ENCODE measurements at regions of chr5 and their contacts with region 1.

Region 1: GRCh38 chr5:127290019-127290945 is at the start of gene MEGF10:
- DNase-seq: peak; percentile 15 to 54 (median 36)
- ATAC-seq: peak; percentile 58
- H3K4me3 ChIP-seq: peak within 1 kb of the TSS in 1 of 2 donors; percentile 2
- H3K27ac ChIP-seq: no peak within 1 kb of the TSS
- H3K4me1 ChIP-seq: peaks cover 9% of the 10 kb centered on the region
- H3K27me3 ChIP-seq: no peaks in the 10 kb centered on the region
- CTCF ChIP-seq: peak; percentile 37 to 67 (median 64)
- POLR2A ChIP-seq: no peak
- total RNA-seq, gene MEGF10: under 0.01 TPM in 1 of 2 donors, not detected in the other

Region 2: GRCh38 chr5:127492854-127493738 is 202.8 kb after region 1 on chr5:
- intact Hi-C with region 1: loop called (anchors 10 kb)
- DNase-seq: no peak
- ATAC-seq: peak; percentile 64
- H3K4me3 ChIP-seq: no peak overlapping the region
- H3K27ac ChIP-seq: no peak overlapping the region
- H3K4me1 ChIP-seq: no peaks in the 10 kb centered on the region
- H3K27me3 ChIP-seq: no peaks in the 10 kb centered on the region
- CTCF ChIP-seq: peak; percentile 45 to 90 (median 68)
- POLR2A ChIP-seq: no peak